Activated B cell treated with CpG ODN at 0.5 μM for 24 hours (primary cell): ENCODE measurements at regions of chr11 and their contacts with region 1.

Region 1: GRCh38 chr11:75689863-75690609 is 21.2 kb upstream of the MAP6 start:
- DNase-seq: no peak
- ATAC-seq: peak; percentile 87
- H3K4me3 Mint-ChIP-seq: peak overlapping the region; percentile 69
- H3K27ac Mint-ChIP-seq: peak overlapping the region; percentile 94
- H3K4me1 Mint-ChIP-seq: peaks cover 40% of the 10 kb centered on the region
- H3K27me3 Mint-ChIP-seq: peaks cover 4% of the 10 kb centered on the region
- CTCF ChIP-seq: no peak

Region 2: GRCh38 chr11:75532200-75533048 is 157.6 kb before region 1 on chr11:
- CTCF ChIA-PET with region 1: no interaction called
- POLR2A ChIA-PET with region 1: no interaction called
- intact Hi-C with region 1: loop called (anchors 2 kb)
- DNase-seq: peak; percentile 60
- ATAC-seq: peak; percentile 71
- H3K4me3 Mint-ChIP-seq: no peak overlapping the region
- H3K27ac Mint-ChIP-seq: no peak overlapping the region
- H3K4me1 Mint-ChIP-seq: peaks cover 23% of the 10 kb centered on the region
- H3K27me3 Mint-ChIP-seq: peaks cover 11% of the 10 kb centered on the region
- CTCF ChIP-seq: no peak

Region 3: GRCh38 chr11:75582895-75583717 is 106.9 kb before region 1 on chr11:
- CTCF ChIA-PET with region 1: no interaction called
- POLR2A ChIA-PET with region 1: no interaction called
- intact Hi-C with region 1: loop called (anchors 1 kb)
- DNase-seq: peak; percentile 63
- ATAC-seq: peak; percentile 90
- H3K4me3 Mint-ChIP-seq: peak overlapping the region; percentile 86
- H3K27ac Mint-ChIP-seq: peak overlapping the region; percentile 75
- H3K4me1 Mint-ChIP-seq: peaks cover 23% of the 10 kb centered on the region
- H3K27me3 Mint-ChIP-seq: no peaks in the 10 kb centered on the region
- CTCF ChIP-seq: no peak

Region 4: GRCh38 chr11:75667831-75668450 is 22.1 kb before region 1 on chr11:
- CTCF ChIA-PET with region 1: no interaction called
- POLR2A ChIA-PET with region 1: no interaction called
- intact Hi-C with region 1: loop called (anchors 2 kb)
- DNase-seq: peak; percentile 45
- ATAC-seq: peak; percentile 43
- H3K4me3 Mint-ChIP-seq: peak overlapping the region; percentile 87
- H3K27ac Mint-ChIP-seq: no peak overlapping the region
- H3K4me1 Mint-ChIP-seq: peaks cover 15% of the 10 kb centered on the region
- H3K27me3 Mint-ChIP-seq: peaks cover 50% of the 10 kb centered on the region
- CTCF ChIP-seq: no peak

Region 5: DNA sequence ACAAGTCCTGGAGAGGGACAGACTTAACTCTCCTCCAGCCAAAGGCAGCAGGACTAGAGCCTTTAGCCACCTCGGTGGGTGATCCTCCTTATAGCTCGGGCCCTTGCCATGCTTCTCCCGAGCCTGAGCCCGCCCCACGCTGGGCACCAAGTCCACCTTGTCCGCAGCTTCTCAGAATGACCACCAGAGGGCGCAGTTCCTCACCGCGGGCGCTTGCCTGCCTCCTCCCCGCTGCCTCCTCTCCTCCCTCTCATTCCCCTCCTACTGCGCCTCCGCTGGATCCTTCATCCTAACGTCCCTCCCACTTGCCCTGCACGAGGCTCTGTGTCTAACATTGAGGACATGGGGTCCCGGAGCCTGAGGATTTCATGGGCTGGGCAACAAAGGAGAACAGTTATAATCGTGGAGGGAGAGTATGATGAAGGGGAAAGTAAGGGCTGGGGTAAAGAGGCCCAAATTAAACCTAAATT is 16.3 kb after region 1 on chr11:
- CTCF ChIA-PET with region 1: interaction called, 6 read pairs
- POLR2A ChIA-PET with region 1: interaction called, 3 read pairs
- intact Hi-C with region 1: loop called (anchors 2 kb)
- DNase-seq: peak; percentile 51
- ATAC-seq: peak; percentile 92
- H3K4me3 Mint-ChIP-seq: no peak overlapping the region
- H3K27ac Mint-ChIP-seq: no peak overlapping the region
- H3K4me1 Mint-ChIP-seq: peaks cover 11% of the 10 kb centered on the region
- H3K27me3 Mint-ChIP-seq: peaks cover 4% of the 10 kb centered on the region
- CTCF ChIP-seq: peak; percentile 33

Region 6: GRCh38 chr11:75768112-75768908 is 78.3 kb after region 1 on chr11 and contains the start of gene DGAT2:
- CTCF ChIA-PET with region 1: no interaction called
- POLR2A ChIA-PET with region 1: no interaction called
- intact Hi-C with region 1: loop called (anchors 1 kb)
- DNase-seq: peak; percentile 84
- ATAC-seq: peak; percentile 76
- H3K4me3 Mint-ChIP-seq: peak within 1 kb of the TSS; percentile 83
- H3K27ac Mint-ChIP-seq: peak within 1 kb of the TSS; percentile 87
- H3K4me1 Mint-ChIP-seq: peaks cover 56% of the 10 kb centered on the region
- H3K27me3 Mint-ChIP-seq: no peaks in the 10 kb centered on the region
- CTCF ChIP-seq: no peak
- total RNA-seq, gene DGAT2: 6.9 and 7.9 TPM in 2 replicates

Region 7: GRCh38 chr11:75773595-75774353 is 83.7 kb after region 1 on chr11:
- CTCF ChIA-PET with region 1: no interaction called
- POLR2A ChIA-PET with region 1: no interaction called
- intact Hi-C with region 1: loop called (anchors 1 kb)
- DNase-seq: peak; percentile 42
- ATAC-seq: peak; percentile 80
- H3K4me3 Mint-ChIP-seq: peak overlapping the region; percentile 1
- H3K27ac Mint-ChIP-seq: peak overlapping the region; percentile 76
- H3K4me1 Mint-ChIP-seq: peaks cover 80% of the 10 kb centered on the region
- H3K27me3 Mint-ChIP-seq: no peaks in the 10 kb centered on the region
- CTCF ChIP-seq: no peak